ENCODE measurements at regions of chr9 and their contacts with region 1.

Region 1: DNA sequence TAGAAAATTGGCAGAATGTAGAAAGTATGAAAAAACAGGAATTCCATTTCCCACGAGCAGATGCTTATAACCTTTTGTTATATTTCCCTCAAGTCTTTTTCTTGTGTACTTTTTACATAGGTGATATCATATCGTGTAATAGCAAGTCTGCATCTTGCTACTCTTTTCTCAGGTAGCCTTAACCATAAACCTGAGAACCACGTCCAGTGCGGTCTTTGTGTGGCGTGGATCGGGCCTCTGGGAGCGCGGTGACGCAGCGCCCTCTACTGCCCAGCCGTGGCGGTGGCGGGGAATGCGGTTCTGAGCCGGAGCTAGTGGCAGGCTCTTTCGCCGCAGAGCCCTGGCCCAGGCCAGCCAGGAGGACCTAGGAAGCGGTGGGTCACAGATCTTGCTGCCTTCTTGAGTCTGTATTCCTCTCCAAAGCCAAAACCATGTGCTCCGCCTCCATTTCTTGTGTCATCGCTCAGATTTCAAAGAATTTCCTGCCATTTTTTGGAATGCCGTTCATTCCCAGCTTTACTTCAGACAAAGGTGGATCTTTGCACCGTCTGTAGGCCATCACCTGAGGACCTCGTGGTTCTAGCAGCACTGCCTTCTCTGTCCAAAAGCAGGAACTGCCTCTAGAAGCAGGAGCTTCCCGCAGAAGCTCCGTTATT is 71.9 kb downstream of the MVB12B start:
- DNase-seq: no peak
- ATAC-seq: peak; percentile 75
- H3K4me3 ChIP-seq: no peak overlapping the region
- H3K27ac ChIP-seq: no peak overlapping the region
- H3K4me1 ChIP-seq: peaks cover 5% of the 10 kb centered on the region
- H3K27me3 ChIP-seq: peaks cover 1 to 13% of the 10 kb centered on the region in 2 experiments
- CTCF ChIP-seq: peak; percentile 96 to 97 (median 96)
- EP300 ChIP-seq: no peak
- POLR2A ChIP-seq: no peak
- RAD21 ChIP-seq: peak; percentile 81

Region 2: GRCh38 chr9:125407974-125408900 is 990.3 kb before region 1 on chr9:
- CTCF ChIA-PET with region 1: interaction called, 34 read pairs
- POLR2A ChIA-PET with region 1: no interaction called
- RAD21 ChIA-PET with region 1: interaction called, 26 read pairs
- SMC1A ChIA-PET with region 1: interaction called, 15 read pairs
- in situ Hi-C with region 1: loop called (anchors 5 kb)
- intact Hi-C with region 1: loop called (anchors 5 kb)
- DNase-seq: no peak
- ATAC-seq: peak; percentile 93
- H3K4me3 ChIP-seq: peak overlapping the region; percentile 70; the same call in 1 of the 2 replicates
- H3K27ac ChIP-seq: no peak overlapping the region
- H3K4me1 ChIP-seq: peaks cover 10% of the 10 kb centered on the region
- H3K27me3 ChIP-seq: no peaks in the 10 kb centered on the region
- CTCF ChIP-seq: peak; percentile 75 to 95 (median 87); a peak in 5 of 6 replicates
- EP300 ChIP-seq: no peak
- POLR2A ChIP-seq: peak; percentile 27; the same call in 1 of the 2 replicates
- RAD21 ChIP-seq: peak; percentile 87

Region 3: DNA sequence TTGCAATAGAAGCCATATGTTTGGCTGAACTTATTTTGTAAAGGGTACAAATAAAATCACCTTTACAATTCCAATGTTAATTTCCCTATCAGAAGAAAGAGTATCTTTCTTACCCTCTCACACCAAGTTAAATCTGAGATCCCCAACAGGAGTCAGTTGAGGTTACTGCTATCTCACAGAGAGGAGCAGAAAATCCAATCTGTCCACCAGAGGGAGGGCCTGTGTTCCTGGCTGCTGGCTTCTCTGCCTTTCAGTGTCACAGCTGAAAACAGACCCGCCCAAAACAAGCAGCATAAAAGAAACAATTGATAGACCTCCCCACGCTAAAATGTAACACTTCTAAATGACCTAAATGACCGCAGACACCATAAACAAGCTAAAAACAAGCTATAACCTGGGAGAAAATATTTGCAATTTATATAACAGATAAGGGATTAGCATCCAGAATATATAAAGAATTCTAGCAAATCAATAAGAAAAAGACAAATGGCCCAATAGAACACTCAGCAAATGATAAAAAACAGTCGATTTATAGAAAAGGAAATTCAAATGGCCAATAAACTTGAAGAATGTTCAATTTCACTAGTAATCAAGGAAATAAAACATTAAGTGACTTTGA is 96.4 kb before region 1 on chr9:
- CTCF ChIA-PET with region 1: interaction called, 16 read pairs
- POLR2A ChIA-PET with region 1: no interaction called
- RAD21 ChIA-PET with region 1: interaction called, 3 read pairs
- SMC1A ChIA-PET with region 1: interaction called, 16 read pairs
- in situ Hi-C with region 1: no loop called
- intact Hi-C with region 1: loop called (anchors 1 kb)
- DNase-seq: no peak
- ATAC-seq: peak; percentile 73
- H3K4me3 ChIP-seq: no peak overlapping the region
- H3K27ac ChIP-seq: no peak overlapping the region
- H3K4me1 ChIP-seq: no peaks in the 10 kb centered on the region
- H3K27me3 ChIP-seq: no peaks in the 10 kb centered on the region
- CTCF ChIP-seq: peak; percentile 44 to 55 (median 50); a peak in 5 of 6 replicates
- EP300 ChIP-seq: no peak
- POLR2A ChIP-seq: no peak
- RAD21 ChIP-seq: peak; percentile 45; the same call in 1 of the 2 replicates

Region 4: GRCh38 chr9:126317513-126317912 is 81.0 kb before region 1 on chr9:
- CTCF ChIA-PET with region 1: interaction called, 7 read pairs
- POLR2A ChIA-PET with region 1: no interaction called
- RAD21 ChIA-PET with region 1: interaction called, 3 read pairs
- SMC1A ChIA-PET with region 1: interaction called, 7 read pairs
- in situ Hi-C with region 1: no loop called
- intact Hi-C with region 1: loop called (anchors 5 kb)
- DNase-seq: no peak
- ATAC-seq: no peak
- H3K4me3 ChIP-seq: no peak overlapping the region
- H3K27ac ChIP-seq: no peak overlapping the region
- H3K4me1 ChIP-seq: no peaks in the 10 kb centered on the region
- H3K27me3 ChIP-seq: no peaks in the 10 kb centered on the region
- CTCF ChIP-seq: peak in 1 of 3 experiments; percentile 14; a peak in 1 of 6 replicates
- EP300 ChIP-seq: no peak
- POLR2A ChIP-seq: no peak
- RAD21 ChIP-seq: no peak

Region 5: DNA sequence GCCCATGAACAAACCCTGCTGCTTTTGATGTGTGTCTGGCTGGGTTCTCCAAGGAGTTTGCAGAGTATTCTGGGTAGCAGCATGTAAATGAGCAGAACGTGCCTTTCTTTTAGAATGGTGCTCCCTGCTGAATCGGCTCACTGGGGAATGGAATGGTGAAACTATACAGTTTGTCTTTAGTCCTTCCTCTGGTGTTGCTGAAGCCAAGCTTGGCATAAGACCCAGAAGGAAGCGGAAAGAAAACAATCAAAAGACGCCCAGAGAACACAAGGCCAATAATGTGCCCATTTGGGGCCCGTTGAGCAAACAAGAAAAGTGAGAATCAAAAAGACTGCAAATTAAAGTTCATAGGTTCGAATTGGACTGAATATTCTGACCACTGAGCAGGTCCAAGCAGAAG is 11.8 kb before region 1 on chr9:
- CTCF ChIA-PET with region 1: interaction called, 10 read pairs
- POLR2A ChIA-PET with region 1: no interaction called
- RAD21 ChIA-PET with region 1: interaction called, 3 read pairs
- SMC1A ChIA-PET with region 1: interaction called, 6 read pairs
- in situ Hi-C with region 1: no loop called
- intact Hi-C with region 1: no loop called
- DNase-seq: no peak
- ATAC-seq: no peak
- H3K4me3 ChIP-seq: no peak overlapping the region
- H3K27ac ChIP-seq: no peak overlapping the region
- H3K4me1 ChIP-seq: no peaks in the 10 kb centered on the region
- H3K27me3 ChIP-seq: no peaks in the 10 kb centered on the region; a peak in 1 of 4 replicates
- CTCF ChIP-seq: no peak
- EP300 ChIP-seq: no peak
- POLR2A ChIP-seq: no peak
- RAD21 ChIP-seq: no peak

Region 6: DNA sequence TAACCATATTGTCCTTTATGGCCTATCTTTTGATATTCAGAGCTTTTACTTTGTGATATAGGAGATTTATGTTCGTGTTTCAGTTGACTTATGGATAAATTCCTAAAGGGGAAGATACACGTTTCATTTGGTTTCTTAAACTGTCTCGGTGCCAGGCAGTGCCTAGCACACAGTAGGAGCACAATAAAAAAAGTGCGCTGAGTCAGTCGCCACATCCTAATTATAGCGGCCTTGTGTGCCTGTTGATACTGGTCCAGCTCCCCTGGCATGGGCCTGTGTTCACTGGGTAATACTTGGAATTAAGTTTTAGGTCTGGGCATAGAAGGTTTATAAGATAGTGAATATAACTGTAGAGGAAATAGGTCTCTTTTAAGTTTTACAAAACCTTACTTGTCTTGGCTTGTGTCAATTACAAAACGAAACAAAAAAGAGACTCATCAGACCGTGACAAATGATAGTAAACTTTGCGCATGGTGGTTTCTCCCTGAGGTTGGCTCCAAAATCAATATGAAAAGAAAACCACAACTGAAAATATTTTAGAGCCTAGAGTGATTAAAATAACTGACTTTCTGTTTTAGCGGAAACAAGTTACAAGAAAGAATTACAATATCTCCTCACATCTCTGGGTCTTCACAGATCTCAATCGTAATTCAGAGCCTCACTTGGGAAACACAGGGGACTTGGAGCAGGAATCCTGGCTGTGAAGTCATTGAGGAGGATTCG is 12.9 kb after region 1 on chr9:
- CTCF ChIA-PET with region 1: interaction called, 11 read pairs
- POLR2A ChIA-PET with region 1: no interaction called
- RAD21 ChIA-PET with region 1: no interaction called
- SMC1A ChIA-PET with region 1: no interaction called
- in situ Hi-C with region 1: no loop called
- intact Hi-C with region 1: no loop called
- DNase-seq: peak; percentile 93
- ATAC-seq: peak; percentile 96
- H3K4me3 ChIP-seq: peak overlapping the region; percentile 39; the same call in 1 of the 2 replicates
- H3K27ac ChIP-seq: no peak overlapping the region; the same call in 1 of the 2 replicates
- H3K4me1 ChIP-seq: peaks cover 12% of the 10 kb centered on the region
- H3K27me3 ChIP-seq: peaks cover 0 to under 1% of the 10 kb centered on the region in 2 experiments; a peak in 2 of 4 replicates
- CTCF ChIP-seq: no peak
- EP300 ChIP-seq: peak; percentile 35 to 90; a peak in 3 of 4 replicates
- POLR2A ChIP-seq: no peak
- RAD21 ChIP-seq: no peak

Region 7: GRCh38 chr9:126636983-126637798 is 238.7 kb after region 1 on chr9:
- CTCF ChIA-PET with region 1: no interaction called
- POLR2A ChIA-PET with region 1: no interaction called
- RAD21 ChIA-PET with region 1: no interaction called
- SMC1A ChIA-PET with region 1: no interaction called
- in situ Hi-C with region 1: no loop called
- intact Hi-C with region 1: no loop called
- DNase-seq: no peak
- ATAC-seq: no peak
- H3K4me3 ChIP-seq: no peak overlapping the region
- H3K27ac ChIP-seq: no peak overlapping the region
- H3K4me1 ChIP-seq: no peaks in the 10 kb centered on the region
- H3K27me3 ChIP-seq: peaks cover 9 to 15% of the 10 kb centered on the region in 2 experiments
- CTCF ChIP-seq: no peak
- EP300 ChIP-seq: no peak
- POLR2A ChIP-seq: no peak
- RAD21 ChIP-seq: no peak